CD4-positive, alpha-beta T cell (primary cell): ENCODE measurements at regions of chr2 and their contacts with region 1.

Region 1: GRCh38 chr2:223365158-223365679 is 236.9 kb downstream of the SCG2 start:
- DNase-seq: no peak
- ATAC-seq: no peak
- H3K4me3 ChIP-seq: no peak overlapping the region
- H3K4me3 Mint-ChIP-seq: no peak overlapping the region
- H3K27ac ChIP-seq: no peak overlapping the region
- H3K27ac Mint-ChIP-seq: no peak overlapping the region
- H3K4me1 ChIP-seq: no peaks in the 10 kb centered on the region
- H3K4me1 Mint-ChIP-seq: no peaks in the 10 kb centered on the region
- H3K27me3 ChIP-seq: no peaks in the 10 kb centered on the region
- H3K27me3 Mint-ChIP-seq: no peaks in the 10 kb centered on the region
- CTCF ChIP-seq: no peak

Region 2: DNA sequence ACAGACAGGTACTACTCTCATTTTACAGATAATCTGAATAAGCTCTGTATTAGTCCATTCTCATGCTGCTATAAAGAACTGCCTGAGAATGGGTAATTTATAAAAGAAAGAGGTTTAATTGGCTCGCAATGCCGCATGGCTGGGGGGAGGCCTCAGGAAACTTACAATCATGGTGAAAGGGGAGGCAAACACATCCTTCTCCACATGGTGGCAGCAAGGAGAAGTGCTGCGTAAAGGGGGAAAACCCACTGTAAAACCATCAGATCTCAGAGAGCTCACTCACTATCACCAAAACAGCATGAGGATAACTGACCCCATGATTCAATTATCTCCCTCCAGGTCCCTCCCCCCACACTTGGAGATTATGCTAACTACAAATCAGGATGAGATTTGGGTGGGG is 58.8 kb before region 1 on chr2:
- CTCF ChIA-PET with region 1: no interaction called
- POLR2A ChIA-PET with region 1: no interaction called
- intact Hi-C with region 1: no loop called
- DNase-seq: no peak
- ATAC-seq: no peak
- H3K4me3 ChIP-seq: no peak overlapping the region
- H3K4me3 Mint-ChIP-seq: no peak overlapping the region
- H3K27ac ChIP-seq: no peak overlapping the region
- H3K27ac Mint-ChIP-seq: no peak overlapping the region
- H3K4me1 ChIP-seq: no peaks in the 10 kb centered on the region
- H3K4me1 Mint-ChIP-seq: no peaks in the 10 kb centered on the region
- H3K27me3 ChIP-seq: no peaks in the 10 kb centered on the region
- H3K27me3 Mint-ChIP-seq: no peaks in the 10 kb centered on the region
- CTCF ChIP-seq: no peak

Region 3: GRCh38 chr2:223399357-223399957 is 34.2 kb after region 1 on chr2:
- CTCF ChIA-PET with region 1: no interaction called
- POLR2A ChIA-PET with region 1: no interaction called
- intact Hi-C with region 1: loop called in 1 of 2 experiments (anchors 1 kb)
- DNase-seq: no peak
- ATAC-seq: no peak
- H3K4me3 ChIP-seq: no peak overlapping the region
- H3K4me3 Mint-ChIP-seq: no peak overlapping the region
- H3K27ac ChIP-seq: no peak overlapping the region
- H3K27ac Mint-ChIP-seq: no peak overlapping the region
- H3K4me1 ChIP-seq: no peaks in the 10 kb centered on the region
- H3K4me1 Mint-ChIP-seq: no peaks in the 10 kb centered on the region
- H3K27me3 ChIP-seq: no peaks in the 10 kb centered on the region
- H3K27me3 Mint-ChIP-seq: no peaks in the 10 kb centered on the region
- CTCF ChIP-seq: no peak